B cell (primary cell): ENCODE measurements at regions of chr10 and their contacts with region 1.

Region 1: DNA sequence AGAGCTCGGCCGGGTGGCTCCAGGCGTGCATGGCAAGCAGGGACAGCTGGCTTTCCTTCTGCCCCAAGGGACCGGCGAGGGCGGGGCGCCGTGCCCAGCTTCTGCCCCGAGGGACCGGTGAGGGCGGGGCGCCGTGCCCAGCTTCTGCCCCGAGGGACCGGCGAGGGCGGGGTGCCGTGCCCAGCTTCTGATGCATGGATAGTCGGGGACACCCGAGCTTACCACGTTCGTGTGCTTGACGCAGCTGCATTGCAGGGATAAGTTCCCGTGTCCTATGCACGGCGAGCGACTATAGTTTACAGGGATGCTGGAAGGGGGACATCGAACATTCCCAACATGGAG is 26.9 kb downstream of the CFAP46 start:
- DNase-seq: peak; percentile 81
- ATAC-seq: peak; percentile 94
- H3K4me3 ChIP-seq: no peak overlapping the region
- H3K4me3 Mint-ChIP-seq: peak overlapping the region; percentile 77
- H3K27ac ChIP-seq: no peak overlapping the region
- H3K27ac Mint-ChIP-seq: peak overlapping the region; percentile 56
- H3K4me1 ChIP-seq: peaks cover 26 to 27% of the 10 kb centered on the region in 2 donors
- H3K4me1 Mint-ChIP-seq: peaks cover 19% of the 10 kb centered on the region
- H3K27me3 ChIP-seq: peaks cover 0 to 31% (median 7%) of the 10 kb centered on the region in 4 experiments
- H3K27me3 Mint-ChIP-seq: peaks cover 17% of the 10 kb centered on the region
- CTCF ChIP-seq: no peak

Region 2: GRCh38 chr10:132939957-132940790 is 24.7 kb after region 1 on chr10:
- CTCF ChIA-PET with region 1: interaction called, 3 read pairs
- POLR2A ChIA-PET with region 1: no interaction called
- intact Hi-C with region 1: loop called (anchors 1 kb)
- DNase-seq: peak; percentile 65
- ATAC-seq: peak; percentile 68
- H3K4me3 ChIP-seq: no peak overlapping the region
- H3K4me3 Mint-ChIP-seq: peak overlapping the region; percentile 76
- H3K27ac ChIP-seq: no peak overlapping the region
- H3K27ac Mint-ChIP-seq: no peak overlapping the region
- H3K4me1 ChIP-seq: peaks cover 19 to 25% of the 10 kb centered on the region in 2 donors
- H3K4me1 Mint-ChIP-seq: peaks cover 27% of the 10 kb centered on the region
- H3K27me3 ChIP-seq: peaks cover 0 to 60% (median 18%) of the 10 kb centered on the region in 4 experiments
- H3K27me3 Mint-ChIP-seq: peaks cover 59% of the 10 kb centered on the region
- CTCF ChIP-seq: peak; percentile 72